Activated T-helper 1 cell treated with anti-CD3 and anti-CD28 coated beads, Interleukin-12 subunit alpha, Interleukin-12 subunit beta, Interleukin-2, Interleukin-4 antibody, amounts not matched to agents 30 ng/mL and 10 ng/mL and 1 ng/mL, durations not matched to agents 14 hours and 24 hours and 36 hours (primary cell): ENCODE measurements at regions of chr18 and their contacts with region 1.

Region 1: DNA sequence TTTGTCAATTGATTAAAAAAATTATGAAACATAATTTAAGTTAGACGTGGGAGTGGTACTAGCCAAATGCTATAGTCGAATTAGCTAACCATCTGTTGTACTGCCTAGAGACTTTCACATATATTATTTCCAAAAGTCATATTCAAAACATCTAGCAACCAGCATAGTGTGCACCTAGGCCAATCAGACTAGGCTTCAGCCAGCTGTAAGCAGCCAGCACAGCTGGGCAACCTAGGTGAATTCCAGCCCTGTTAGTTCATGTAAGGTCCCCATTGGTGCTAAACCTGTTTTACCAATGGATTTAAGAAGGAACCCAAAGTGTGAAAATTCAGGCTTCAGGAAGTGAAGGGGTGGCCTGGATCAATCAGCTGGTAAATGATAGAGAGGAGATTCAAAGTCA is 144.3 kb downstream of the BCL2 start:
- DNase-seq: no peak
- H3K4me3 Mint-ChIP-seq: no peak overlapping the region
- H3K27ac Mint-ChIP-seq: no peak overlapping the region
- H3K4me1 Mint-ChIP-seq: peaks cover 43% of the 10 kb centered on the region
- H3K27me3 Mint-ChIP-seq: no peaks in the 10 kb centered on the region

Region 2: DNA sequence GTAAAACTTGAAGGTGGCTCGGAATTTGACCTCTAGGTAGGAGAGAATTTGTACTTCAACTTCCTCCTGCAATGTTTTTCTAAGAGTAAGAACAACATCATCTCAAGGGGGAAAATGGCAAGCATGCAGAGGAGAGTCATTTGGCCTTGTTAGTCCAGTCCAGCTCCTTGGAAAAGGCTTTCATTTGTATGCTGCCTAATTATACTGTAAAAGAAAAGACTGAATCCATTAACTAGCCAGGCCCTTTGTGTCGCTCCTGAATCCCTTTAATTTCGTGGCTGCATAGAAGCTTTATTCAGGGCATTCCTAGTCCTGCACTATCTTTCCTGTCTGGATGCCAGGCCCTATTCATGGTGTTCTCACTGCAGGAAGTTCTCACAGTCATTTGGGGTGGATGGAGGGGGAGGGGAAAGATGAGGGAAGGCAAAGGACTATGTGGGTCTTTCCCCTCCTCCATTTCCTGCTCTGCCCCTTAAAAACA is 423.9 kb before region 1 on chr18:
- intact Hi-C with region 1: no loop called
- DNase-seq: no peak
- H3K4me3 Mint-ChIP-seq: no peak overlapping the region
- H3K27ac Mint-ChIP-seq: no peak overlapping the region
- H3K4me1 Mint-ChIP-seq: peaks cover 14% of the 10 kb centered on the region
- H3K27me3 Mint-ChIP-seq: peaks cover 8% of the 10 kb centered on the region

Region 3: DNA sequence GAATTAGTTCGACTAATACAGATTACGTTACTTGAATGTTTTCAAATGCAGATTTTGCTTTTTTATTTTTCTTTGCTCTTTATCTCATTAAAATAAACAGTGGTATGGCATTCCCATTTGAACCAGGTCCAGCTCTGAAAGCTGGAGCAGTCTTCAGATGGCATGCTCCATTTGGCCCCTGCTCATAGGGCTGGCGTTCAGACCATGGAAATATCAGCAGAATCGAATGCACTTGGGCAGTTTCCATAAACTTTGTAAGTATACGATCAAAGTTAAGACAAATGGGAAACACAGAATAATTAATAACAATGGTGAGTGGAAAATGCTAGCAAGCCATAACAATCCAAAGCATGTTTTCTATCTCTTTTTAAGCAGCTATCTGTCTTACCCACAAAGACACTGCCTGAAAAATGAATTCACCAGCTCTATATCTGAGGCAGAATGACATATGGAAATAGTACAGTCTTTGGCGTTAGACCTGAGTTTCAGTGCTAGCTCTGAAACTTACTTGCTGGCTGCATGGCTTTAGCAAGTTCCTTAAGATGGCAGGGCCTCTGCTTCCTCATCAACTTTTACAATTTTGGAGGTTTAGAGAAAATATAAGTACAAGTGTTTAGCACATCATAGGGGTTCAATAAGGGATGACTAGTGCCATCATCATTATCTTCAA is 12.7 kb after region 1 on chr18:
- intact Hi-C with region 1: loop called (anchors 2 kb)
- DNase-seq: no peak
- H3K4me3 Mint-ChIP-seq: no peak overlapping the region
- H3K27ac Mint-ChIP-seq: peak overlapping the region; percentile 57
- H3K4me1 Mint-ChIP-seq: peaks cover 83% of the 10 kb centered on the region
- H3K27me3 Mint-ChIP-seq: no peaks in the 10 kb centered on the region